BJ (cell line): ENCODE measurements at regions of chr14 and their contacts with region 1.

Region 1: DNA sequence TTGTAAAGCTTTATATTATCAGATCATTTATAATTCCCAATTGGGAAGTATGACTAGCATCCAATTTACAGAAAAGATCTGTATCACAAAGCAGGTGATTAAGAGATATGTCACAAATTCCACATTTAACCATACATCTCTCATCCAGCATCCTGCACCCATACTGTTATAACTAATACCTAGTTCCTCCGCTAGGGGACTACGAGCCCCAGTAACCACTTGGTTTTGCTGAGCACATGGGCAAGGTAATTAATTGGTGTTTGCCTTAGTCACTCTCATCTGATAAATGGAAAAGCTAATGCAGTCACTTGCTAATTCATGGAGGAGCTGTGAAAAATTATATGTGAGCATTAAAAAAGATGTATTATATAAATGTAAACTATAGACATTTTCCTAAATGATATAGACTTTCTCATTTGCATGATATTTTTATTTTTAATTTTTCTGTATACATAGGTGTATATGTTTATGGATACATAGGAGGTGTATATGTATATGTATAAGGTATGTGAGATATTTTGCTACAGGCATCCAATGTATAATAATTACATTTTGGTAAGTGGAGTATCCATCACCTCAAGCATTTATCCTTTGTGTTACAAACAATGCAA is 1031.8 kb downstream of the GALC start:
- DNase-seq: no peak
- H3K4me3 ChIP-seq: no peak overlapping the region
- H3K27me3 ChIP-seq: no peaks in the 10 kb centered on the region
- CTCF ChIP-seq: peak; percentile 64

Region 2: GRCh38 chr14:86892152-86892956 is 68.9 kb before region 1 on chr14:
- CTCF ChIA-PET with region 1: no interaction called
- POLR2A ChIA-PET with region 1: no interaction called
- DNase-seq: no peak
- H3K4me3 ChIP-seq: no peak overlapping the region
- H3K27me3 ChIP-seq: no peaks in the 10 kb centered on the region
- CTCF ChIP-seq: no peak

Region 3: GRCh38 chr14:86971292-86971691 is 10.1 kb after region 1 on chr14:
- CTCF ChIA-PET with region 1: interaction called, 10 read pairs
- POLR2A ChIA-PET with region 1: no interaction called
- DNase-seq: no peak
- H3K4me3 ChIP-seq: no peak overlapping the region
- H3K27me3 ChIP-seq: no peaks in the 10 kb centered on the region
- CTCF ChIP-seq: no peak

Region 4: DNA sequence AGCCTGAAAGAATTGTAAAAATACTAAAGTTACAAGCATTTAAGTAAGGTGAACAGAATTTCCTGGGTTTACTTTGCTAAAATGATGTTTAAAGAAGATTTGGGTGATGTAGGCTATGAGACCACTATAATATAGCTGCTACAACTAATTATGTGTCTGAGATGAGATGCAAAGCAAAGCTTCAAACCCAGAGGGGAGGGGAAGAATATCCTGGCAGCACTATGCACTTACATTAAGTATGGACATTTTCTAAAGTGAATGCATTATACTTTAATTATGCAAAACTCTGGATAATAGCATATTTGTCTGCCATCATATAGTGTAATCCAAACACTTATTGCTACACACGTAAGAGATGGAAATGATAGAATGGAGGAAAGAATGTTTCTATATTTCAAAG is 28.1 kb after region 1 on chr14:
- CTCF ChIA-PET with region 1: no interaction called
- POLR2A ChIA-PET with region 1: no interaction called
- DNase-seq: no peak
- H3K4me3 ChIP-seq: no peak overlapping the region
- H3K27me3 ChIP-seq: no peaks in the 10 kb centered on the region
- CTCF ChIP-seq: no peak

Region 5: GRCh38 chr14:87014854-87015253 is 53.6 kb after region 1 on chr14:
- CTCF ChIA-PET with region 1: no interaction called
- POLR2A ChIA-PET with region 1: no interaction called
- DNase-seq: no peak
- H3K4me3 ChIP-seq: no peak overlapping the region
- H3K27me3 ChIP-seq: no peaks in the 10 kb centered on the region
- CTCF ChIP-seq: peak; percentile 21; the same call in 1 of the 2 replicates

Region 6: DNA sequence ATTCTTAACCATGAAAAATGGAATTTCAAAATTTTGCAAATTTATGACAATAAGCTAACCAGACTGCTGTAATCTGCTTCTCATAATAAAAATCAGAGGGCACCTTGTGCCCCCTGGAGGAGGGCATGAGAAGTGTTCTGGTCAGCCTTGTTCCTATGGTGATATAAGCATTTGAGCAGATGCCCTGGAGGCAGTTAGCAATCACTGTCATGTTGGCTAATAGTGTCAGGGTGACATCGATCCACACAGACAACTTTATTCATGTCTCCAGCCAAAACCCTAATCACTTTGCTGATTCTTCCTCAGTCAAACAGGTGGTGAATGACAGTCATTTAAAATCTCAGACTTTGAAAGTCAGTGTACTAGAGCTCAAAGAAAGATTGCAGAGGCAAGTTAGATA is 88.7 kb after region 1 on chr14:
- CTCF ChIA-PET with region 1: interaction called, 13 read pairs
- POLR2A ChIA-PET with region 1: no interaction called
- DNase-seq: peak; percentile 4
- H3K4me3 ChIP-seq: no peak overlapping the region
- H3K27me3 ChIP-seq: no peaks in the 10 kb centered on the region
- CTCF ChIP-seq: peak; percentile 76

Region 7: DNA sequence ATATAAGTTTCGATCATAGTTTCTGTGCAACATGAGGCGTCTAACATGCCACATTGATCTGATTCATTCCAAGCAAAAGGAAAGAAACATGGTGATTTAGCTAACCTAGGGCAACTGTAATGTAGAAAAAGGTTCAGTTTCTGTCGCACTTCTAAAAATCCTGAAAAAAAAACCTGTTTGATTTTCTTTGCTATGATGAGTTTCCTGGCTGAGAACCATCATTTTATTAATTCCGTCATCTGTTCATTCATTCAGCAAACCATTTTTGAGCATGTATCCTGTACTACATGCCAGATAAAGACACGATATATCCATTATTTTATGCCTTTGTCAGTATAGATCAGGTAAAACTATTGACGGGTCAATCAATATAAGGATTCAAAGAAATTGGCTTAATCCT is 99.2 kb after region 1 on chr14:
- CTCF ChIA-PET with region 1: no interaction called
- POLR2A ChIA-PET with region 1: no interaction called
- DNase-seq: no peak
- H3K4me3 ChIP-seq: no peak overlapping the region
- H3K27me3 ChIP-seq: no peaks in the 10 kb centered on the region
- CTCF ChIP-seq: no peak